ENCODE measurements at regions of chr14 and their contacts with region 1.

Region 1: DNA sequence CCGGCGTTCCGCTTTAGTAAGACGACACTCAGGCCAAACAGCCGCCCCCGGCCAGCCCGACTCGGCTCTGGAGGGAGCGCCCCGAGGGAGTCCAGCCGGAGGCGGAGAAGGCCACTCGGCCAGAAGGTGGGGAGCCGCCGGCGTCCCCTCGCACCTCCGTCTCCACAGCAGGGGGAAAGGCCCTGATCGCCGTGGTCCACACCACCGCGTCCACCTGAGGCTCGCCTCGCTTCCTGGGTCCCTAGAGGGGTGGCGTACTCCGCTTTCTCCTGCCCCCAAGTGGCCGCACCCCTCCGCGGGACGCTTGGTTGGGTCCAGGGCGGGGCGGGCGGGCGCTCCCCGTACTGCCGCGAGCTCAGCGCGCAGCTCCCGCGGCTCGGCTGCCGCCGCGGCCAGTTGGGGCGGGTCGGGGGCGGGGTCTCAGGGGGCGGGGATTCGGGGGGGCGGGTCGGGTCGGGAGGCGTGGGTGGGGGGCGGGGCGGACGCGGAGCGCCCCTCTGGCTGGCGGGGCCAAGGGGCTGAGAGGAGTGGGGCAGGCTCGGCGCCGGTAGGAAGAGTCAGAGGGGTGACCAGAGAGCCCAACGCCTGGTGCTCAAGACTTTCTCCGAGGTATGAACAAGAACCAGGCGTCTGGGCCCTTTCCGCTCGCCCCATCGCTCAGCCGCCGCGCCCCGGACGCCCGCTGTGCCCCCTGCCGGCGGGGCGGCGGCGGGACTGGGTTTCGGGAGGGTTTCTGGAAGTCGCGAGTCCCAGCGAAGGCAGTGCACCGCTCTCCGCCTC is at the start of gene FRMD6:
- DNase-seq: peak; percentile 50 to 92
- H3K4me3 ChIP-seq: peak within 1 kb of the TSS; percentile 88 to 90
- H3K27ac ChIP-seq: peak within 1 kb of the TSS; percentile 95 to 99
- H3K4me1 ChIP-seq: peaks cover 0 to 8% of the 10 kb centered on the region in 2 donors
- H3K27me3 ChIP-seq: no peaks in the 10 kb centered on the region
- CTCF ChIP-seq: peak; percentile 80 to 87 (median 81)
- total RNA-seq, gene FRMD6: 104 TPM

Region 2: DNA sequence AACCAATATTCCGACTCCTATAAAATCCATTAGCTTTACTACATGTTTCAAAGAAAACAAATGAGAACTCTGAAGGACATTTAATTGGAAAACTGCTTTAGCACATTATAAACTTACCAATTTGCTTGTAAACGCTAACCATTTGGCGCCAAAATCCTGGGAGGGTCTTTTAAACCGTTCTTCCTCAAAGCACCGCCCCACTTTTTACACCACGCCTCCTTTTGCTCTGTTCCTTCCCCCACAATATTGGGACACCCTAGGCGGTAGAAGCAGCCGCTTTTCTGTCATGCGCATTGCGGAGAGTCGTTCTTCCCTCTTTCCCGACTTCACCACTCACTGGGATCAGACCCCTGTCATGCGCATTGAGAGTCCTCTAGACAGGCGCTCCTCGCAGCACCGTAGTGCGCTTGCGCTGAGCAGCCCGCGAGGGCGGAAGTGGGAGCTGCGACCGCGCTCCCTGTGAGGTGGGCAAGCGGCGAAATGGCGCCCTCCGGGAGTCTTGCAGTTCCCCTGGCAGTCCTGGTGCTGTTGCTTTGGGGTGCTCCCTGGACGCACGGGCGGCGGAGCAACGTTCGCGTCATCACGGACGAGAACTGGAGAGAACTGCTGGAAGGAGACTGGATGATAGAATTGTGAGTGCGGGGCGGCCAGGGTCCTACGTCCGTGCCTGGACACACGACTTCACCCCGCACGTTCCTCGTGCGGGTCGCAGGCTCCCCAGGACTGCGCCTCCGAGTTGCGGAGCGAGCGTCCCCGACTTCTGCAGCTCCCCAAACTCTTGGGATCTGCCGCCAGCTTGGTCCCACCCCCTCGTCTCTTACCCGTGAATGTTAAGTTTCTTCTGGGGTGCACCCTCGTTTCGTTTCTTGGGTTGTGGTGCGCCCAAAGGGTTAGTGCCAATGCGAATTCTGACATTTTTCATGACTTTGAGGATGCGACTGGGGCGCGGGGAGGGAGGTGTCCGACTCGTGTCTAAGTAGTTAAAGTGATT is 411.5 kb before region 1 on chr14 and contains the start of gene TMX1:
- intact Hi-C with region 1: loop called (anchors 2 kb)
- DNase-seq: peak; percentile 92 to 98
- H3K4me3 ChIP-seq: peak within 1 kb of the TSS; percentile 93 to 96
- H3K27ac ChIP-seq: peak within 1 kb of the TSS; percentile 84 to 88
- H3K4me1 ChIP-seq: peaks cover 0 to 5% of the 10 kb centered on the region in 2 donors
- H3K27me3 ChIP-seq: no peaks in the 10 kb centered on the region
- CTCF ChIP-seq: no peak
- total RNA-seq, gene TMX1: 5.1 TPM

Region 3: DNA sequence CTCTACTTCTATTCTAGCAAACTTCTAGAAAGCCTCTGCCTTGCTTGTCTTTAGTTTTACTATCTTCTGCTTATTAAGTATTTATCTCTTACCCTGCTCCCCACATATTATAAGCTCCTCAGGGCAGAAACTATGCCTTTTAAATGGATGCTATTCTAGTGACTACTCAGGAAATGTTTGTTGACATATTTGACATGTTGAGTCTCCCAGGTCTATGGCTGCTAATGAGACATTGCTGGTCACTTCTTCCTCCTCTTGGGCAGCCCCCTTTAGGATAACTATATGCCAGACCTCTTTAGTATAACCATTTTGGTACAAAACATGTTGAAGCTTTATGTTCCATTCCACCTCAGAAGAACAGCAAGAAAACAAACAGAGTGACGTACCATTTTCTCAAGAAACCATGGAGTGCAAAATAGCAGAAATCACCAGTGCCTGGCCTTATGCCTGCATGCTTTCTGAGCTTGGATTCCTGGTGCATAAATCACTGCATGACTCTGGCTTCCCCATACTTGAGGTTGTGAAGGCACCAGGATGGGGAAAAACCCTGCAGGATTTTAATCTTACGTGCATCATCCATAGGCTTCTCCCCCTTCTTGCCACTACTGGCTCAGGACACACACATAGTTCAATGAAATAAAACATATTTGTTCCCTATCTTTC is 208.9 kb before region 1 on chr14:
- intact Hi-C with region 1: loop called (anchors 2 kb)
- DNase-seq: peak in 1 of 2 donors; percentile 75
- H3K4me3 ChIP-seq: no peak overlapping the region
- H3K27ac ChIP-seq: peak overlapping the region; percentile 27 to 49
- H3K4me1 ChIP-seq: peaks cover 0 to 9% of the 10 kb centered on the region in 2 donors
- H3K27me3 ChIP-seq: no peaks in the 10 kb centered on the region
- CTCF ChIP-seq: no peak

Region 4: DNA sequence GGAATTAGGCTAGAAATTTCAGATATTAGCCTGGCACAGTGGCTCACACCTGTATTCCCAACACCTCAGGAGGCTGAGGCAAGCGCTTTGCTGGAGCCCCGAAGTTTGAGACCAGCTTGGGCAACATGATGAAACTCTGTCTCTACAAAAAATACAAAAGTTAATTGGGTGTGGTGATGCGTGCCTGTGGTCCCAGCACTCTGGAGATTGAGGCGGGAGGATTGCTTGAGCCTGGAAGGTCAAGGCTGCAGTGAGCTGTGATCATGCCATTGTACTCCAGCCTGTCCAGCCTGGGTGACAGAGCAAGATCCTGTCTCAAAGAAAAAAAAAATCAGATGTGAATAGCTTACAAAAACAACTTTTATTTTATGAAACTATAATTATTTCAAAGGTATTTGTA is 15.2 kb after region 1 on chr14:
- intact Hi-C with region 1: no loop called
- DNase-seq: no peak
- H3K4me3 ChIP-seq: no peak overlapping the region
- H3K27ac ChIP-seq: no peak overlapping the region
- H3K4me1 ChIP-seq: peaks cover 0 to 13% of the 10 kb centered on the region in 2 donors
- H3K27me3 ChIP-seq: no peaks in the 10 kb centered on the region
- CTCF ChIP-seq: no peak

Region 5: GRCh38 chr14:51704545-51704944 is 53.0 kb after region 1 on chr14:
- intact Hi-C with region 1: loop called (anchors 5 kb)
- DNase-seq: no peak
- H3K4me3 ChIP-seq: no peak overlapping the region
- H3K27ac ChIP-seq: peak overlapping the region; percentile 34 to 38
- H3K4me1 ChIP-seq: peaks cover 0 to 5% of the 10 kb centered on the region in 2 donors
- H3K27me3 ChIP-seq: no peaks in the 10 kb centered on the region
- CTCF ChIP-seq: no peak

Region 6: DNA sequence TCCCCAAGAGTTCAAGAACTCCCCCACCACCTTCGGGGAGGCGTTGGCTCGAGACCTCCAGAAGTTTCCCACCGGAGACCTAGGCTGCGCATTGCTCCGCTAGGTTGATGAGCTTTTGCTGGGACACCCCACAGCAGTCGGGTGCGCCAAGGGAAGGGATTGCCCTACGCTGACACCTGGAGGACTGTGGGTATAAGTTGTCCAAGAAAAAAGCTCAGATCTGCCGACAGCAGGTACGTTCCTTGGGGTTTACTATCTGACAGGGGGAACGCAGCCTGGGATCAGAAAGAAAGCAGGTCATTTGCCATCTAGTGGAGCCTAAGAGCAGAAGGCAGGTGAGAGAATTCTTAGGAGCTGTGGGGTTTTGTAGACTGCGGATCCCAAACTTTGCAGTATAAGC is 99.0 kb after region 1 on chr14:
- intact Hi-C with region 1: no loop called
- DNase-seq: no peak
- H3K4me3 ChIP-seq: no peak overlapping the region
- H3K27ac ChIP-seq: no peak overlapping the region
- H3K4me1 ChIP-seq: no peaks in the 10 kb centered on the region
- H3K27me3 ChIP-seq: no peaks in the 10 kb centered on the region
- CTCF ChIP-seq: no peak

Region 7: GRCh38 chr14:51989293-51990234 is 338.0 kb after region 1 on chr14 and contains the start of gene RTRAF:
- intact Hi-C with region 1: loop called (anchors 5 kb)
- DNase-seq: peak; percentile 59 to 96
- H3K4me3 ChIP-seq: peak within 1 kb of the TSS; percentile 89 to 94
- H3K27ac ChIP-seq: peak within 1 kb of the TSS; percentile 86 to 94
- H3K4me1 ChIP-seq: peaks cover 0 to 3% of the 10 kb centered on the region in 2 donors
- H3K27me3 ChIP-seq: no peaks in the 10 kb centered on the region
- CTCF ChIP-seq: no peak
- total RNA-seq, gene RTRAF: 15.3 TPM